H1 (cell line): ENCODE measurements at regions of chr3 and their contacts with region 1.

Region 1: GRCh38 chr3:46406788-46407611 is at the starts of genes CCR5AS and CCRL2:
- DNase-seq: no peak
- H3K4me3 ChIP-seq: no peak within 1 kb of the TSS
- H3K27ac ChIP-seq: no peak within 1 kb of the TSS
- H3K4me1 ChIP-seq: no peaks in the 10 kb centered on the region
- H3K27me3 ChIP-seq: no peaks in the 10 kb centered on the region; a peak in 1 of 7 replicates
- CTCF ChIP-seq: no peak
- EP300 ChIP-seq: no peak
- POLR2A ChIP-seq: no peak
- RAD21 ChIP-seq: no peak
- total RNA-seq, gene CCRL2: not detected in 2 replicates

Region 2: DNA sequence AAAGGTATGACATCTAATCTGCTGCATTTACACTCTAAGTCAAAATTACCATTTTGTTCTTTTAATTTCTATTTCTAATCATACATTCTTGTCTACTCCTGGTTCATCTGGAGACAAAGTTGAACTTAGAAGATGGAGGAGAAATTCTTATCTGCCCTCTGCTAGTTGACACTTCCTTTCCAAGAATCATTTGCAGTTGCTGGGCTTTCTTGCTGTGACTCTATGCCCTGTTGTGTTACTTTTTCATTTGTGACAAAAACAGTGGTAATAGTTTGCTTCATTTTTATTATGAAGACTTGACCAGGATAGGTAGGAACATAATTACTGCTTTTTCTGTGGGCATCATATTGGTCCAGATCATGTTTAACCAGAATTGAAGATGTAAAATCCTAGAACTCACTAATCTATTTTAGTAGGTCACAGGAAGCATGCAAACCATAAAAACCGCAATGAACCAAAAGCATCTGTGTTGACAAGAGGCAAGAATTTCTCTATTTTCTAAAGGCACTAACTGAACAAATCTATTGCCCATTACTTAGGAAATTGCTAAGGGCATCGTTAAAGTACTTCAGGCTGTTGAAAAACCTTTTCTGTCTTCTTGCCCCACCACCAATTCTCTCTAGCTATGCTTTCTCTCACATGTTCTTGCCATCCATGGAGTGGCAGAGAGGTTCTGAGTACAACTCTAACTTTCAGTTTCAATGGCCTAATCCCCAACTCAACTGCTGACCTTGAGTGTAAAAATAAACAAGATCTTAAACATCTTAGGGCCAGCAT is 57.3 kb before region 1 on chr3:
- CTCF ChIA-PET with region 1: no interaction called
- POLR2A ChIA-PET with region 1: no interaction called
- DNase-seq: no peak
- H3K4me3 ChIP-seq: no peak overlapping the region
- H3K27ac ChIP-seq: no peak overlapping the region
- H3K4me1 ChIP-seq: no peaks in the 10 kb centered on the region; a peak in 1 of 7 replicates
- H3K27me3 ChIP-seq: no peaks in the 10 kb centered on the region
- CTCF ChIP-seq: no peak
- EP300 ChIP-seq: no peak
- POLR2A ChIP-seq: no peak
- RAD21 ChIP-seq: no peak

Region 3: DNA sequence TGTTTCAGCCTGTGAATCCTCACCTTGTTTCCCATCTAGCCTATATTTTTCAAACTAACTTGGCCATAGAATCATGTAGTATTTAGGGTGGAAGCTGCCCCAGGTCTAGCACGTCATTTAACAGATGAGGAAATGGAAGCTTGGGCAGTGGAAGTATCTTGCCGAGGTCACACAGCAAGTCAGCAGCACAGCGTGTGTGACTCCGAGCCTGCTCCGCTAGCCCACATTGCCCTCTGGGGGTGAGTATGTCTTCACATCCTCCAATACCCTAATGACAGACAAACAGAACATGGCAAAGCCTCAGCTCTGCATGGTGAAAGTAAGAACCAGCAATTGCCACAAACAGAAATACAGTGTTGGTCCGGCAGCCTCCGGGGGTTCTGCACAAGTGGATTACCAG is 38.4 kb before region 1 on chr3:
- CTCF ChIA-PET with region 1: interaction called, 11 read pairs
- POLR2A ChIA-PET with region 1: no interaction called
- DNase-seq: peak; percentile 43 to 60
- H3K4me3 ChIP-seq: no peak overlapping the region
- H3K27ac ChIP-seq: no peak overlapping the region
- H3K4me1 ChIP-seq: no peaks in the 10 kb centered on the region
- H3K27me3 ChIP-seq: peaks cover 0 to 5% (median 0%) of the 10 kb centered on the region in 4 experiments; a peak in 1 of 7 replicates
- CTCF ChIP-seq: peak; percentile 77 to 78 (median 77)
- EP300 ChIP-seq: no peak
- POLR2A ChIP-seq: no peak
- RAD21 ChIP-seq: peak; percentile 89 to 90

Region 4: DNA sequence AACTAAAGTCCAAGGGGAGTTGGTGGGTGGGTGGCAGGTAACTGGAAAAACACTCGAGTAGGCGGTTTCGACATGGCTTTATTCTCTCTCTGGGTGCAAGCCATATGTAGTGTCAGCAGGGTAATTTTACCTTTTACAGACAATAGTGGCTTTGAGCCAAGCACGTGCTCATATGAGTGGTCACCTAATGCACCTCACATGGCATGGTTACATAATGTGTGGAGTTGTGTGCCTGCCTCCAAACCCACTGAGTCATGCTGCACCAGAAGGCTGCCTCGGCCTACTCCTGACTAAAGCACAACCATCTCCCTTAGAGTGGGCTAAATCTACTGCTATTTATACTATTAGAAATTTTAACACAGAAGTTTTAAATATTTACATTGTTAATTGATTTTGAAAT is 16.6 kb after region 1 on chr3:
- CTCF ChIA-PET with region 1: interaction called, 31 read pairs
- POLR2A ChIA-PET with region 1: no interaction called
- DNase-seq: no peak
- H3K4me3 ChIP-seq: no peak overlapping the region
- H3K27ac ChIP-seq: no peak overlapping the region
- H3K4me1 ChIP-seq: peaks cover 0 to 2% (median 1%) of the 10 kb centered on the region in 4 experiments; a peak in 4 of 7 replicates
- H3K27me3 ChIP-seq: no peaks in the 10 kb centered on the region
- CTCF ChIP-seq: no peak
- EP300 ChIP-seq: no peak
- POLR2A ChIP-seq: no peak
- RAD21 ChIP-seq: no peak